ENCODE measurements at regions of chr3 and their contacts with region 1.

Region 1: DNA sequence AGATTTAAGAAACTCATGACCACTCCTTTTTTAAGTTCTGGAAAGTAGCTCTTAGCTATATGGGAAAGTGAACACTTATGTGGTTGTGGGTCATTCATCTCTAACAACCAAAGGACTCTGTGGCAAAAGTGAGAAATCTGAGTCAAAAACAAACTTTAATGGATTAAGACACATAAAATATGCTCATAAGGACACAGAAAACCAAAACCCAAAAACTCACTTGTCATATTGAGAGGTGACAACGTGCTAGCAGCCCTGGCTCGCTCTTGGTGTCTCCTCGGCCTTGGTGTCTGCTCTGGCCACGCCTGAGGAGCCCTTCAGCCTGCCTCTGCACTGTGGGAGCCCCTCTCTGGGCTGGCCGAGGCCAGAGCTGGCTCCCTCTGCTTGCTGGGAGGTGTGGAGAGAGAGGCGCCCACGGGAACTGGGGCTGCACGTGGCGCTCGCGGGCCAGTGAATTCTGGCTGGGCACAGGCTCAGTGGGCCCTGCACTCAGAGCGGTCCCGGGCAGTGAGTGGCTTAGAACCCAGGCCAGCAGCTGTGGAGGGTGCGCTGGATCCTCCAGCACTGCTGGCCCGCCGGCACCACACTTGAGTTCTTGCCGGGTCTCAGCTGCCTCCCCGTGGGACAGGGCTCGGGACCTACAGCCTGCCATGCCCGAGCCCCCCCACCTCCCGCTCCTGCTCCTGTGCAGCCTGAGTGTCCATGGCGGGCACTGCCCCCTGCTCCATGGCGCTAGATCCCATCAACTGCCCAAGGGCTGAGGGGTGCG is 30.3 kb upstream of the SKIL start:
- DNase-seq: no peak
- H3K4me3 ChIP-seq: no peak overlapping the region
- H3K27ac ChIP-seq: no peak overlapping the region
- H3K4me1 ChIP-seq: no peaks in the 10 kb centered on the region
- H3K27me3 ChIP-seq: no peaks in the 10 kb centered on the region
- CTCF ChIP-seq: no peak

Region 2: GRCh38 chr3:170277833-170278580 is 49.2 kb before region 1 on chr3:
- CTCF ChIA-PET with region 1: no interaction called
- dilution Hi-C with region 1: loop called (anchors 5 kb)
- in situ Hi-C with region 1: no loop called
- intact Hi-C with region 1: no loop called
- DNase-seq: no peak
- H3K4me3 ChIP-seq: no peak overlapping the region
- H3K27ac ChIP-seq: no peak overlapping the region
- H3K4me1 ChIP-seq: no peaks in the 10 kb centered on the region
- H3K27me3 ChIP-seq: no peaks in the 10 kb centered on the region
- CTCF ChIP-seq: no peak

Region 3: GRCh38 chr3:170437696-170438407 is 110.6 kb after region 1 on chr3:
- CTCF ChIA-PET with region 1: no interaction called
- dilution Hi-C with region 1: no loop called
- in situ Hi-C with region 1: no loop called
- intact Hi-C with region 1: no loop called
- DNase-seq: no peak
- H3K4me3 ChIP-seq: no peak overlapping the region
- H3K27ac ChIP-seq: no peak overlapping the region
- H3K4me1 ChIP-seq: no peaks in the 10 kb centered on the region
- H3K27me3 ChIP-seq: no peaks in the 10 kb centered on the region
- CTCF ChIP-seq: no peak

Measured in mammary epithelial cell (primary cell).